MCF 10A (cell line): ENCODE measurements at regions of chr14 and their contacts with region 1.

Region 1: DNA sequence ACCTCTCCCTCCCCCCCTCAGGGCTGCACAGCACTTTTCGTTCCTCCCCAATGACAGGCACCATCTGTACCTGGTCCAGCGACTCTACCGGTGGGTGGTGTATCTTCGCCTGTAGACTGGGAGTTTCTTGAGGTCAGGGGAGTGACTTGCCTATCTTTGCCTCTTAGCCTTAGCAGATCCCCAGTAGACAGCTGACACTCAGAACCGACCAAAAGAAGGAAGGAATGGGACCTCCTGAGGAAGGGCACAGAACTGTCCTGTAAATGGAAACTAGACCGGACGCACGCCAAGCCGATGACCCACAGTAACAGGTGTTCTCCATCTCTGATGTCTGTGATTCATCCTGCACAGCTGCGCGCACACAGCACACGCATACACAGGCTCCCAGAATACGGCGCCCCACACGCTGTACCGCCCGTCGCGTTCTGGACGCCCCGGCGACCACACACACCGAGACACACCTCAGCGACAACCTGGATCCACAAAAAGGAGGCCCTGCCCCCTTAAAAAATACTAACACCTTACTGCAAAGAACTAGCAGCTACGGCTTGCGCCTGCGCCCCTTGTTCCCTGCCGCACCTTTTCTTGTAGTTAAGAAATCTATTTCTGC is 673 bp upstream of the TTC9 start:
- DNase-seq: peak; percentile 40
- H3K4me3 Mint-ChIP-seq: peak overlapping the region; percentile 85
- H3K27ac Mint-ChIP-seq: no peak overlapping the region
- H3K4me1 Mint-ChIP-seq: no peaks in the 10 kb centered on the region
- H3K27me3 Mint-ChIP-seq: peaks cover 16% of the 10 kb centered on the region
- CTCF ChIP-seq: no peak

Region 2: DNA sequence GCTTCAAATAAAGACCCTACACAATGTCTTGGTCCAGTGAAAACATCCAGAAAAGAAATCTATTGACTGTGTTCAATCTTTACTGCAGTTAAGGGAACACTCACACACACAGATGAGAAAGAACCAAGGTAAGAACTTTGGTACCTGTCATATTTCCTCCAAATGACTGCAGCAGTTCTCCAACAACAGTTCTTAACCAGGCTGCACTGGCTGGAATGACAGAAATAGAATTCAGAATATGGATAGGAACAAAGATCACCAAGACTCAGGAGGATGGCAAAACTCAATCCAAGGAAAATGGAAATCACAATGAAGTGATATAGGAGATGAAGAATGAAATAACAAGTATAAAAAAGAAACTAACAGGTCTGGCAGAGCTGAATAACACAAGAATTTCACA is 142.9 kb before region 1 on chr14:
- CTCF ChIA-PET with region 1: no interaction called
- POLR2A ChIA-PET with region 1: no interaction called
- intact Hi-C with region 1: no loop called
- DNase-seq: no peak
- H3K4me3 Mint-ChIP-seq: no peak overlapping the region
- H3K27ac Mint-ChIP-seq: no peak overlapping the region
- H3K4me1 Mint-ChIP-seq: peaks cover 7% of the 10 kb centered on the region
- H3K27me3 Mint-ChIP-seq: no peaks in the 10 kb centered on the region
- CTCF ChIP-seq: no peak

Region 3: GRCh38 chr14:70698288-70698687 is 57.2 kb after region 1 on chr14:
- CTCF ChIA-PET with region 1: no interaction called
- POLR2A ChIA-PET with region 1: no interaction called
- intact Hi-C with region 1: loop called (anchors 5 kb)
- DNase-seq: peak; percentile 53
- H3K4me3 Mint-ChIP-seq: no peak overlapping the region
- H3K27ac Mint-ChIP-seq: peak overlapping the region; percentile 65
- H3K4me1 Mint-ChIP-seq: peaks cover 18% of the 10 kb centered on the region
- H3K27me3 Mint-ChIP-seq: no peaks in the 10 kb centered on the region
- CTCF ChIP-seq: no peak